Sigmoid colon (tissue), 7 donors: ENCODE measurements at regions of chr7 and their contacts with region 1.

Region 1: GRCh38 chr7:83413831-83414230 is 235.1 kb downstream of the SEMA3E start:
- DNase-seq: no peak
- H3K4me3 ChIP-seq: no peak overlapping the region
- H3K27ac ChIP-seq: no peak overlapping the region
- H3K4me1 ChIP-seq: no peaks in the 10 kb centered on the region
- H3K27me3 ChIP-seq: no peaks in the 10 kb centered on the region
- CTCF ChIP-seq: no peak
- EP300 ChIP-seq: no peak
- POLR2A ChIP-seq: no peak

Region 2: GRCh38 chr7:83613232-83613631 is 199.4 kb after region 1 on chr7:
- intact Hi-C with region 1: no loop called
- DNase-seq: no peak
- H3K4me3 ChIP-seq: no peak overlapping the region
- H3K27ac ChIP-seq: no peak overlapping the region
- H3K4me1 ChIP-seq: no peaks in the 10 kb centered on the region
- H3K27me3 ChIP-seq: no peaks in the 10 kb centered on the region
- CTCF ChIP-seq: no peak
- EP300 ChIP-seq: no peak
- POLR2A ChIP-seq: no peak

Region 3: GRCh38 chr7:83652481-83652880 is 238.7 kb after region 1 on chr7:
- intact Hi-C with region 1: loop called (anchors 2 kb)
- DNase-seq: no peak
- H3K4me3 ChIP-seq: no peak overlapping the region
- H3K27ac ChIP-seq: no peak overlapping the region
- H3K4me1 ChIP-seq: peaks cover 0 to 10% (median 4%) of the 10 kb centered on the region in 4 donors
- H3K27me3 ChIP-seq: no peaks in the 10 kb centered on the region
- CTCF ChIP-seq: no peak
- EP300 ChIP-seq: no peak
- POLR2A ChIP-seq: no peak

Region 4: GRCh38 chr7:84422790-84423189 is 1009.0 kb after region 1 on chr7:
- intact Hi-C with region 1: no loop called
- DNase-seq: no peak
- H3K4me3 ChIP-seq: no peak overlapping the region
- H3K27ac ChIP-seq: no peak overlapping the region
- H3K4me1 ChIP-seq: no peaks in the 10 kb centered on the region
- H3K27me3 ChIP-seq: no peaks in the 10 kb centered on the region
- CTCF ChIP-seq: no peak
- EP300 ChIP-seq: no peak
- POLR2A ChIP-seq: no peak